HepG2 (cell line): ENCODE measurements at regions of chr14 and their contacts with region 1.

Region 1: DNA sequence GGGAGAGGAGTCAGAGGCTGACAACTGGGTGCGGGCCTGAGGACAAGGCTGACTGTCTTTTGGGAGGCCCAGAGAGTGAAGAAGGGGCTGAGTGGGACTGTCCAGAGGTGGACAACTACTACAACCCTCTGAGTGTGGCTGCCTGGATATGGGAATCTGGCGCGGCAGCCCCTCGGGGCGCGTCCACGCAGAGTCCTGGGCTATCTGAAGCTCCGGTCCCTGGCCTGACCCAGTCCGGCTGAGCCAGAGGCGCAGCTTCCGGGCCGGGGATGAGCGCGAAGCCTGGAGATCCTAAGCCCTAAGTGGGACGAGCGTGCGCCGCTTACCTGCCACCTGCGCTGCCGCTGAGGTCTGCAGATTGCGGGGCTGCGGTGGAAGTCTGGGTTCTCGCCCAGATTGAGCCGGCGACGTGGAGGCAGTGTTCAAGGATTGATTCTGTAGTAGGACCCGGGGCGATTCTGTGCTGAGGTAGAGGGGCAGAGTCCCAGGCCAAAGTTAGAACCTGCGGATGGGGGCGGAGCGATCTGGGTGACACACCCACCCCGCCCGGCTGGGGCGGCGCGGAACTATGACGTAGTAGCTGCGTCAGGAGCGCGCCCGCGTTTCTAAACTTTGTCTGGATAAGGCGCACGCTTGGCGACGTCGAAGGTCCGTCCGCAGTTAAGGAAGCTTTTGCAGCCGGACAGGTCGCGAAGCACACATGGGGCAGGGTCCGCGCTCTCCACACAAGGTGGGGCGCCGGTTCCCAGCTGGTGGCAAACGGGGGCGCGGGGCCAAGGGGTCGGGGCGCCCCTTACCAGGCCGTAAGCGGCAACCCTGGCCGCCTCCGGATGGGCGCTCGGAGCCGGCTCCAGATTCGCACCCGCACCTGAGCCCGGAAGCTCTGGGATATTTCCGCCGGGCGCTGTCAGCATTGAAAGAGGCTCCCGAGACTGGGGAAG is at the starts of genes DHRS1 and NOP9:
- DNase-seq: peak; percentile 93
- ATAC-seq: peak; percentile 80
- H3K4me3 ChIP-seq: peak within 1 kb of the TSS; percentile 79 to 98 (median 89)
- H3K27ac ChIP-seq: peak within 1 kb of the TSS; percentile 83
- H3K4me1 ChIP-seq: peaks cover 45% of the 10 kb centered on the region
- H3K27me3 ChIP-seq: no peaks in the 10 kb centered on the region; a peak in 1 of 5 replicates
- CTCF ChIP-seq: peak; percentile 53
- EP300 ChIP-seq: peak; percentile 63 to 81; a peak in 3 of 4 replicates
- POLR2A ChIP-seq: peak in 1 of 2 experiments; percentile 88; a peak in 2 of 4 replicates
- RAD21 ChIP-seq: peak; percentile 54; the same call in 1 of the 2 replicates
- total RNA-seq, gene DHRS1: 46.3 and 60.8 TPM in 2 replicates
- total RNA-seq, gene NOP9: 61.6 and 64.5 TPM in 2 replicates

Region 2: DNA sequence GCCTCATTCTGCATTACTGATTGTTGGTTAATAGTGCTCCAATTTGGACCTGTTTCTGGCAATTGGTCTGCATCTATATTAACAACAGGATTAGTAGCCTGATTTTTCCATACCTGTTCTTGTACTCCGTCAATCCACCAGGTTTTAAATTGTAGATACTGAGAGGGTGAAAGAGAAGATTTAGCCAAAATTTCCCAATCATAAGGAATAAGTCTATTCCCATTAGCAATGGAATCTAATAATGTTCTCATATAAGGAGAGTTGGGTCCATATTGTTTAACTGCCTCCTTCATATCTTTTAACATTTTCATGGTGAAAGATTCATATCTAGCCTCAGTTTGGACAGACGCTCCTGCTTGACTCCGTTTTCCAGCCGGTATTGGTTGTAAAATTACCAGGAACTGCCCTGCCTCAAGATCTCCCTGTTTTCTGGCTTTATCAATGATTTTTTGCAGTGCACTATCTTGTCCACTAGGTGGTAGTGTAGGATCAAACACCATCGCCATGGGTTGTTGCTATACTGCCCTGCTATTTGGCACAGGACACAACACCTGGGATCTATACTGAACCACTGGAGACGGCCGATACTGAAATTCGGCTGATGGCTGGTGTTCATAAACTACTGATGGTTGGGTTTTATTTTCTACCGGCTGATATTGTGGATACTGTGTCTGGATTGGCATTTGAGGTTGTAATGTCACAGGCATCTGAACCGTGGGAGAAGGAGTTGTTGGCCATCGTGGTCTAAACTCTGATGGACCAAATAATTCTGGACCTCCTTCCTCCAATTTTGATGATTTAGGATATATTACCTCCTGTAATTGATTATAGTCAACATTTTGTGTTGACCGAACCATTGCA is 285.6 kb before region 1 on chr14:
- CTCF ChIA-PET with region 1: interaction called, 11 read pairs
- POLR2A ChIA-PET with region 1: no interaction called
- in situ Hi-C with region 1: no loop called
- intact Hi-C with region 1: loop called (anchors 2 kb)
- DNase-seq: peak; percentile 92
- ATAC-seq: peak; percentile 98
- H3K4me3 ChIP-seq: no peak overlapping the region
- H3K27ac ChIP-seq: no peak overlapping the region
- H3K4me1 ChIP-seq: peaks cover 53% of the 10 kb centered on the region
- H3K27me3 ChIP-seq: no peaks in the 10 kb centered on the region
- CTCF ChIP-seq: peak; percentile 100
- EP300 ChIP-seq: peak in 1 of 2 experiments; percentile 11; a peak in 1 of 4 replicates
- POLR2A ChIP-seq: no peak
- RAD21 ChIP-seq: peak; percentile 100

Region 3: DNA sequence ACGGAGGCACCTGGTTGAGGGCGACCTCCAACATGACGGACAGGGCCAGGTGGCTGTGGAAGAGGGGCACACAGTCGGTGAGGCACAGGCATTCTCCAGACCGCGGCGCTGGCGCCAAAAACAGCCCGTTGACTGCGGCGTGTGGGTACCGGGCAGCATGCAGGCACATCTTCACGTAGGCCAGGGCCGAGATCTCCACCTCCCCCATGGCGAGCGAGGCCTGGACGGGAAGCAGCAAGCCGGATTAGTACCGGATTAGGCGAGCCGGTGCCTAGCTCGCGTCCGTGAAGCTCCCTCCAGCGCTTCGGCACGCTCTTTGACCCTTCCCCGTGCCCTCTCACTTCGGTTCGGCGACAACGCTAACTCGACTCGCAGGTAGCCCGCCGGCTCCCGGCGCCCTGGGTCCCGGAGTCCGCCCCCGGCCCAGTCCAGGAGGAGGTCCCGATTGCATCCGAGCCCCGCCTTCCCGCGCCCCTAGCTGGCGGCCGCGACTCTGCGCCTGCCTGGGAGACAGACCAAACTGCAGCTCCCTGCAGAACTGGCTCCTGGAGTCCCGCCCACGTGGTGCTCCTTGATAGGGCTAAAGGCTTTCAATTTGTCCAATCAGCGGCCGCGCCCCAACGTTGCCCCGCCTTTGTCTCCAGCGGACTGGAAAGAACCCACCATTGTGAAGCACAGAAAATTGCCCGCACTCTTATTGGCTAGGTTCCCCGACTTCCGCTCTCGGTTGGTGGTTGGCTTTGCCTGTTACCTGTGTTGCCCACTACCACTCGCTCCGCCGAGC is 158.2 kb before region 1 on chr14 and contains the start of gene EMC9:
- CTCF ChIA-PET with region 1: no interaction called
- POLR2A ChIA-PET with region 1: interaction called, 14 read pairs
- in situ Hi-C with region 1: no loop called
- intact Hi-C with region 1: loop called (anchors 2 kb)
- DNase-seq: peak; percentile 100
- ATAC-seq: peak; percentile 88
- H3K4me3 ChIP-seq: peak within 1 kb of the TSS; percentile 83 to 99 (median 95)
- H3K27ac ChIP-seq: peak within 1 kb of the TSS; percentile 86
- H3K4me1 ChIP-seq: peaks cover 77% of the 10 kb centered on the region
- H3K27me3 ChIP-seq: peaks cover 0 to 3% of the 10 kb centered on the region in 2 experiments; a peak in 1 of 5 replicates
- CTCF ChIP-seq: peak; percentile 53
- EP300 ChIP-seq: peak in 1 of 2 experiments; percentile 70; a peak in 2 of 4 replicates
- POLR2A ChIP-seq: peak in 1 of 2 experiments; percentile 88; a peak in 2 of 4 replicates
- RAD21 ChIP-seq: peak; percentile 84
- total RNA-seq, gene EMC9: 71.2 and 78.7 TPM in 2 replicates

Region 4: DNA sequence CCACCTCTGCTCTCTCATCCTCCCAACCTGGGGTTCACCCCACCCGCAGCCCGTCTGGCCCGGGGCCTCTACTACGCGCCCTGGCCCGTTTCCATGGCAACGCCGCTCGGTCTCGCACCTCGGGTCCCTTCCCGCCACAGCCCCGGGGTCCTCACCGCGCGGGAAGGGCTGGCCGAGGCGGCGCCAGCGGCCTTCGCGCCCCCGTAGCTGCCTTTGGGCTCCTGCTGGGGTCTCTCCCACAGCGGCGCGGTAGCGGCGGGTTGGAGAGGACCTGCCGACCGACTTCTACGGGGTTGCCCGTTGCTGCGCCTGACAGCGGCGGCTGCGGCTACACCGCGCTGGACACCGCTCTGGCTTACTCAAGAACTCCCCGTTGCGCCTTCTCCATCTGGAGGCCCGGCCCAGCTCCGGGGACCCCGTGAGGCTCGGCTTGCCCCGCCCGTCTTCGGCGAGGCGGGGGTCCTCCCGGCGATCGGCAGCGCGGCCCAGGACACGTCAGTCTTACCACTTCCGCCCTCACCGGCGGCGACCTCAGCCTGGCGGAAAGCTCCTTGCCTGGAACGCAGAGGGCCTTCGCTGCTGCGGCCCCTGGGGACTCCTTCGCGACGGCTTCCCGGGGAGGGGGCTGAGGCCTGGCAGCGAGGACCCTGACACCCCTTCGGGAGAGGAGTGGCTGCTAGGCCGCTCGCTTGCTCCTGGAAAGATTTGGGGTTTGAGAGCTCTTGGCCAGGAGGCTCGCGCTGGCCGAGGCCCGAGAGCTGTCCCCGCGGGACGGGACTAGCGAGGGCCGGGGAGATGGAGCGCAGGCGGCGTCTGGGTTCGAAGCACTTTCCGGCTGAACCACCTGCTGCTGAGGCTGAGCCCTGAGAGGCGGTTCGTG is 104.1 kb before region 1 on chr14 and contains the start of gene TM9SF1:
- CTCF ChIA-PET with region 1: no interaction called
- POLR2A ChIA-PET with region 1: interaction called, 24 read pairs
- in situ Hi-C with region 1: no loop called
- intact Hi-C with region 1: loop called (anchors 1 kb)
- DNase-seq: peak; percentile 93
- ATAC-seq: peak; percentile 94
- H3K4me3 ChIP-seq: peak within 1 kb of the TSS; percentile 79 to 91 (median 85)
- H3K27ac ChIP-seq: peak within 1 kb of the TSS; percentile 84
- H3K4me1 ChIP-seq: peaks cover 65% of the 10 kb centered on the region
- H3K27me3 ChIP-seq: no peaks in the 10 kb centered on the region; a peak in 1 of 5 replicates
- CTCF ChIP-seq: peak; percentile 54
- EP300 ChIP-seq: peak; percentile 7 to 39; a peak in 1 of 4 replicates
- POLR2A ChIP-seq: peak in 1 of 2 experiments; percentile 81; a peak in 2 of 4 replicates
- RAD21 ChIP-seq: peak; percentile 52
- total RNA-seq, gene TM9SF1: 56.4 and 110 TPM in 2 replicates

Region 5: DNA sequence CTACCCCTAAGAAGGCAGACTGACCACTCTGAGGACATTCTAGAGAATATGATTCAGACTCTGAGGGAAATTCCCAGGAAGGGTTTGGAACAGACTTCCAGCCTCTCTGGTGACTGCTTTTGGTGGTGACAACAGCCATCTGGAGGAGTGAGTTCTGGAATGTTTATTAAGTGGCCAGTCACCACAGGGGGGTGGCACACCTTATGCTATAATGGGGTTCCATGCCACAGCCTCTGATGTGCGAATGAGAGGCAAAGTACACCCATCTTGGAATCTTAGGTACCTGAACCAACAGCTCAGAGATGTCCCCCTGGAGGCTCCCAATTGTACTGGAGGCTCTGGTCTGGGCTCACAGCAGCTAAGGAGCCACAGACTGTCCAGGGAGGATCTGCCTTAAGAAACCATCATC is 47.6 kb before region 1 on chr14:
- CTCF ChIA-PET with region 1: no interaction called
- POLR2A ChIA-PET with region 1: interaction called, 850 read pairs
- in situ Hi-C with region 1: no loop called
- intact Hi-C with region 1: no loop called
- DNase-seq: no peak
- ATAC-seq: peak; percentile 32
- H3K4me3 ChIP-seq: no peak overlapping the region
- H3K27ac ChIP-seq: peak overlapping the region; percentile 59
- H3K4me1 ChIP-seq: peaks cover 35% of the 10 kb centered on the region
- H3K27me3 ChIP-seq: no peaks in the 10 kb centered on the region
- CTCF ChIP-seq: no peak
- EP300 ChIP-seq: no peak
- POLR2A ChIP-seq: 0 out of 4 replicates have a peak, but pooled peaks of 1 of the 2 experiments have one; percentile 2
- RAD21 ChIP-seq: no peak

Region 6: DNA sequence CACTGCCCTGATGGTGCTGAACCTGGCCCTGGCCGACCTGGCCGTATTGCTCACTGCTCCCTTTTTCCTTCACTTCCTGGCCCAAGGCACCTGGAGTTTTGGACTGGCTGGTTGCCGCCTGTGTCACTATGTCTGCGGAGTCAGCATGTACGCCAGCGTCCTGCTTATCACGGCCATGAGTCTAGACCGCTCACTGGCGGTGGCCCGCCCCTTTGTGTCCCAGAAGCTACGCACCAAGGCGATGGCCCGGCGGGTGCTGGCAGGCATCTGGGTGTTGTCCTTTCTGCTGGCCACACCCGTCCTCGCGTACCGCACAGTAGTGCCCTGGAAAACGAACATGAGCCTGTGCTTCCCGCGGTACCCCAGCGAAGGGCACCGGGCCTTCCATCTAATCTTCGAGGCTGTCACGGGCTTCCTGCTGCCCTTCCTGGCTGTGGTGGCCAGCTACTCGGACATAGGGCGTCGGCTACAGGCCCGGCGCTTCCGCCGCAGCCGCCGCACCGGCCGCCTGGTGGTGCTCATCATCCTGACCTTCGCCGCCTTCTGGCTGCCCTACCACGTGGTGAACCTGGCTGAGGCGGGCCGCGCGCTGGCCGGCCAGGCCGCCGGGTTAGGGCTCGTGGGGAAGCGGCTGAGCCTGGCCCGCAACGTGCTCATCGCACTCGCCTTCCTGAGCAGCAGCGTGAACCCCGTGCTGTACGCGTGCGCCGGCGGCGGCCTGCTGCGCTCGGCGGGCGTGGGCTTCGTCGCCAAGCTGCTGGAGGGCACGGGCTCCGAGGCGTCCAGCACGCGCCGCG is 16.5 kb after region 1 on chr14:
- CTCF ChIA-PET with region 1: interaction called, 7 read pairs
- POLR2A ChIA-PET with region 1: interaction called, 213 read pairs
- in situ Hi-C with region 1: no loop called
- intact Hi-C with region 1: no loop called
- DNase-seq: peak; percentile 65
- ATAC-seq: peak; percentile 81
- H3K4me3 ChIP-seq: peak overlapping the region; percentile 29 to 73 (median 40)
- H3K27ac ChIP-seq: peak overlapping the region; percentile 18
- H3K4me1 ChIP-seq: peaks cover 37% of the 10 kb centered on the region
- H3K27me3 ChIP-seq: peaks cover 6 to 39% of the 10 kb centered on the region in 2 experiments; a peak in 4 of 5 replicates
- CTCF ChIP-seq: peak; percentile 88
- EP300 ChIP-seq: 0 out of 4 replicates have a peak, but pooled peaks of 1 of the 2 experiments have one; percentile 9
- POLR2A ChIP-seq: no peak; a peak in 2 of 4 replicates
- RAD21 ChIP-seq: peak; percentile 72

Region 7: GRCh38 chr14:24389201-24389848 is 89.8 kb after region 1 on chr14:
- CTCF ChIA-PET with region 1: no interaction called
- POLR2A ChIA-PET with region 1: no interaction called
- in situ Hi-C with region 1: no loop called
- intact Hi-C with region 1: no loop called
- DNase-seq: no peak
- ATAC-seq: no peak
- H3K4me3 ChIP-seq: no peak overlapping the region
- H3K27ac ChIP-seq: no peak overlapping the region
- H3K4me1 ChIP-seq: peaks cover 44% of the 10 kb centered on the region
- H3K27me3 ChIP-seq: peaks cover 4 to 21% of the 10 kb centered on the region in 2 experiments; a peak in 4 of 5 replicates
- CTCF ChIP-seq: no peak
- EP300 ChIP-seq: no peak
- POLR2A ChIP-seq: no peak
- RAD21 ChIP-seq: no peak